ENCODE measurements at regions of chr6 and their contacts with region 1.

Region 1: DNA sequence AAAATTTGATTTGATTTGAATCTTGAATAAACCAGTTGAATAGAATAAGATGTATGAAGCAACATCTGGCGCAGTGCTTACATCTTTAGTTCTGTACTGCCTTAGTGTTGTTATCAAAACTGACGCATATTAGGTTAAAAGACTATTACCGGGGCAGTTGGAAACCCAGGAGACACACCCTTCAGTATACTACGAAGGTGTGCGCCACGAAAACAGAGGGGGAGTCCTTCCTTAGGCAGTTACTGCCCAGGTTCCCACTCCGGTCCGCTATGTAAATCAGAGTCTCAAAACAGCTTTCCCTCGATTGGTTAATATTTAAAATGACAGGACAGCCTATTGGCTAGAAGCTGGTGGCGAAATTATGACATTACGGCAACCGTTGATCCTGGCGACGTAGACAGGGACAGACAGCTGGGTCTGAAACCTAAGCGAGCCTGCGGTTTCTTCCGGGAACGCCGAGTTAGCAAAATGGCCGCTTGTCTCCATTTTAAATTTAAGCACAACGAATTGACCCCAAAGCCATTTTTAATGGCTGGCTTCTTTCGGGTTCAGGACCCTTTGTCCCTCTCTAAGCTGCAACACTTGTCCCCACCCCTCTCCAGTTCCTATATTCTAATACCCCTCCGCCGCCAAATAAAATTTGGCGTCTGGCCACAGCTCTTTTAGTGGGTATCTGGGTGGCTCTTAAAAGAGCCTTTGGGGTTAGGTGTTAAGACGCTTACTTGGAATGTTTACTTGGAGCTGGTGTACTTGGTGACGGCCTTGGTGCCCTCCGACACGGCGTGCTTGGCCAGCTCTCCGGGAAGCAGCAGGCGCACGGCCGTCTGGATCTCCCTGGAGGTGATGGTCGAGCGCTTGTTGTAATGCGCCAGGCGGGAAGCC is 35.8 kb downstream of the HFE start:
- DNase-seq: peak; percentile 95
- H3K4me3 Mint-ChIP-seq: peak overlapping the region; percentile 97
- H3K27ac Mint-ChIP-seq: peak overlapping the region; percentile 100
- H3K4me1 Mint-ChIP-seq: peaks cover 40% of the 10 kb centered on the region
- H3K27me3 Mint-ChIP-seq: no peaks in the 10 kb centered on the region

Region 2: DNA sequence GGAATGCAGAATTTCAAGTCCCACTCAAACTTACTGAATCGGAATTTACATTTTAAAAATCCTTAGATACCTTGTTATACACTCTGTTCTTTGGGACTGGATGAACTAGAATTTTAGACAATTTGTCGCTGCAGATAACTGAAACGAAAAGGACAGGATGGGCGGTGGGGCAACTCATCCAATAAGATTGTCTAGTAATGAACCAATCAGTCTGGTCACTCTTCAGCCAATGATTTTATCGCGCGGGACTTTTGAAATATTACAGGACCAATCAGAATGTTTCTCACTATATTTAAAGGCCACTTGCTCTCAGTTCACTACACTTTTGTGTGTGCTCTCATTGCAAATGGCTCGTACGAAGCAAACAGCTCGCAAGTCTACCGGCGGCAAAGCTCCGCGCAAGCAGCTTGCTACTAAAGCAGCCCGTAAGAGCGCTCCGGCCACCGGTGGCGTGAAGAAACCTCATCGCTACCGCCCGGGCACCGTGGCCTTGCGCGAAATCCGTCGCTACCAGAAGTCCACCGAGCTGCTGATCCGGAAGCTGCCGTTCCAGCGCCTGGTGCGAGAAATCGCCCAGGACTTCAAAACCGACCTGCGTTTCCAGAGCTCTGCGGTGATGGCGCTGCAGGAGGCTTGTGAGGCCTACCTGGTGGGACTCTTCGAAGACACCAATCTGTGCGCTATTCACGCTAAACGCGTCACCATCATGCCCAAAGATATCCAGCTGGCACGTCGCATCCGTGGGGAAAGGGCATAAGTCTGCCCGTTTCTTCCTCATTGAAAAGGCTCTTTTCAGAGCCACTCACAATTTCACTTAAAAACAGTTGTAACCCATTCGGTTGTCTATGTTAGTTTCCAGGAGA is 77.7 kb before region 1 on chr6:
- CTCF ChIA-PET with region 1: interaction called, 8 read pairs
- POLR2A ChIA-PET with region 1: interaction called, 276 read pairs
- DNase-seq: peak; percentile 82
- H3K4me3 Mint-ChIP-seq: peak overlapping the region; percentile 79
- H3K27ac Mint-ChIP-seq: peak overlapping the region; percentile 99
- H3K4me1 Mint-ChIP-seq: peaks cover 44% of the 10 kb centered on the region
- H3K27me3 Mint-ChIP-seq: no peaks in the 10 kb centered on the region

Region 3: GRCh38 chr6:26097268-26097875 is 25.7 kb before region 1 on chr6:
- CTCF ChIA-PET with region 1: interaction called, 14 read pairs
- POLR2A ChIA-PET with region 1: interaction called, 204 read pairs
- DNase-seq: peak; percentile 64
- H3K4me3 Mint-ChIP-seq: no peak overlapping the region
- H3K27ac Mint-ChIP-seq: no peak overlapping the region
- H3K4me1 Mint-ChIP-seq: peaks cover 10% of the 10 kb centered on the region
- H3K27me3 Mint-ChIP-seq: peaks cover 11% of the 10 kb centered on the region

Region 4: DNA sequence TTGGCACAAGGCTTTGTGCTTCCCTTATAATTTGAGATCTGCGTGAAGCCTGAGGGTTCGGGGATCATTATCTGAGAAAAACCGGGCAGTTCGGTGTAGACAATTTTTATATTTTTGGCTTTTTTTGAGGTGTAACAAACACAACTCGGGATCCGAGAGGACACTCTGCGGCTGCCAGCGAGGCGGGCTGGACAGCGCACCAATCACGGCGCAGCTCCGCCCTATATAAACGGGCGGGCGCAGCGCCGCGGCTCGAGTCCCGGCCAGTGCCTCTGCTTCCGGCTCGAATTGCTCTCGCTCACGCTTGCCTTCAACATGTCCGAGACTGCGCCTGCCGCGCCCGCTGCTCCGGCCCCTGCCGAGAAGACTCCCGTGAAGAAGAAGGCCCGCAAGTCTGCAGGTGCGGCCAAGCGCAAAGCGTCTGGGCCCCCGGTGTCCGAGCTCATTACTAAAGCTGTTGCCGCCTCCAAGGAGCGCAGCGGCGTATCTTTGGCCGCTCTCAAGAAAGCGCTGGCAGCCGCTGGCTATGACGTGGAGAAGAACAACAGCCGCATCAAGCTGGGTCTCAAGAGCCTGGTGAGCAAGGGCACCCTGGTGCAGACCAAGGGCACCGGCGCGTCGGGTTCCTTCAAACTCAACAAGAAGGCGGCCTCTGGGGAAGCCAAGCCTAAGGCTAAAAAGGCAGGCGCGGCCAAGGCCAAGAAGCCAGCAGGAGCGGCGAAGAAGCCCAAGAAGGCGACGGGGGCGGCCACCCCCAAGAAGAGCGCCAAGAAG is 33.2 kb after region 1 on chr6:
- CTCF ChIA-PET with region 1: interaction called, 65 read pairs
- POLR2A ChIA-PET with region 1: interaction called, 2,087 read pairs
- DNase-seq: peak; percentile 91
- H3K4me3 Mint-ChIP-seq: peak overlapping the region; percentile 95
- H3K27ac Mint-ChIP-seq: peak overlapping the region; percentile 98
- H3K4me1 Mint-ChIP-seq: peaks cover 45% of the 10 kb centered on the region
- H3K27me3 Mint-ChIP-seq: no peaks in the 10 kb centered on the region

Region 5: GRCh38 chr6:26196846-26197648 is 74.0 kb after region 1 on chr6:
- CTCF ChIA-PET with region 1: interaction called, 7 read pairs
- POLR2A ChIA-PET with region 1: interaction called, 499 read pairs
- DNase-seq: peak; percentile 85
- H3K4me3 Mint-ChIP-seq: peak overlapping the region; percentile 93
- H3K27ac Mint-ChIP-seq: peak overlapping the region; percentile 96
- H3K4me1 Mint-ChIP-seq: peaks cover 49% of the 10 kb centered on the region
- H3K27me3 Mint-ChIP-seq: no peaks in the 10 kb centered on the region

Region 6: DNA sequence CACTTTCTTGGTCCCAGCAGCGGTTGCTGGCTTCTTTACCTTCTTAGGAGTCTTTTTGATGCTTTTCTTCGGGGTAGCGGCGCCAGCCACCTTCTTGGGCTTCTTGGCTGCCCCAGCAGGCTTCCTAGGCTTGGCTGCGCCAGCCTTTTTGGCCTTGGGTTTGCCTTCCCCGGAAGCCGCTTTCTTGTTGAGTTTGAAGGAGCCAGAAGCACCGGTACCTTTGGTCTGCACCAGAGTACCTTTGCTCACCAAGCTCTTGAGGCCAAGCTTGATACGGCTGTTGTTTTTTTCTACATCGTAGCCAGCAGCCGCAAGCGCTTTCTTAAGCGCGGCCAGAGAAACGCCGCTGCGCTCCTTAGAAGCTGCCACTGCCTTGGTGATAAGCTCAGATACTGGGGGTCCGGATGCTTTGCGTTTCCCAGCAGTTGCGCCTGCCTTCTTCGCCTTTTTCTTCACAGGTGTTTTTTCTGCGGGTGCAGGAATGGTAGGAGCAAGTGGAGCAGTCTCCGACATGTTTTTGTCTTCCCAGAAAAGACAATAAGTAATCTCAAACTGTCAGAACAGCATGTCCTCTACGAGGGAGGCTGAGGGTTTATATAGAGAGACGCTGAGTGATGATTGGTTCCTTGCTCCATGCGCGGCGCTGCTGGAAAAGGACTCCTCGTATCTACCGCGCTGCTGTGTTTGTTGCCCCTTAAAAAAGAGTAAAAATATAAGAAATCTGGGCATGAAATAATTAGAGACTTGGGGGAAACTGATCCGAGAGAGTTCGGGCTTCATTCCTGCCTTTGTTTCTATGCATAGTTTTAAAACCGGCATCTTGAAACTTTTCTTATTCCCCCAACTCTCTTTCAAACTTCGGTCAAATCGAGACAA is 111.6 kb after region 1 on chr6:
- CTCF ChIA-PET with region 1: interaction called, 7 read pairs
- POLR2A ChIA-PET with region 1: interaction called, 149 read pairs
- DNase-seq: peak; percentile 85
- H3K4me3 Mint-ChIP-seq: peak overlapping the region; percentile 76
- H3K27ac Mint-ChIP-seq: peak overlapping the region; percentile 95
- H3K4me1 Mint-ChIP-seq: peaks cover 41% of the 10 kb centered on the region
- H3K27me3 Mint-ChIP-seq: no peaks in the 10 kb centered on the region

Region 7: DNA sequence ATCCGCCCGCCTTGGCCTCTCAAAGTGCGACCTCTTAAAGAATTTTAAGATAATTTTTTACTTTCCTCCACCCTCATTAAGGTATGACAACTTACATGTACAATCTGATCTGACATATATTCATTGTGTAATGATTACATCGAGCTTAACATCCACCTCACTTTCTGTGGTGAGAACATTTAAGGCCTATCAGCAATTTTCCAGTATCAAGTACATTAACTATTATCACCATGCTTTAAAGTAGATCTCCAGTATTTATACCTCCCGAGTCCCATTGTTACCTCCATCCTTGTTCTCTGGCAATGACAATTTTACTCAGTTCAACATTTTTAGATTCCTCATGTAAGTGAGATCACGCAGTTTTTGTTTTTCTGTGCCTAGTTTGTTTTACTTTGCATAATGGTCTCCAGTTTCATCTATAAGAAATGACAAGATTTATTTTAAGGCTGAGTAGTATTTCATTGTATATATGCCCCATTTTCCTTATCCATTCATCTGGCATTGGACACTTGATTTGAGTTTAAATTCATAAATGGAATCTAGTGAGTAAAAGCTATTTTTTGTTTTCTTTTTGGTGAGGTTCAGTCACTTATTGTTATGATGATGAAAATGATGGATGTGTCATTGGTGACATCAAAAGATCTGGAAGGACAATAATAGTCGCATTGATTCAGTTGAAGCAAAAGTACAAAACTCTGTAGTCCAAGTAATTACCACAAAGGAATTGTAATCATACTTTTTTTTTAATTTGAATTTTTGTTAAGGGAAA is 1702.2 kb after region 1 on chr6:
- CTCF ChIA-PET with region 1: no interaction called
- POLR2A ChIA-PET with region 1: interaction called, 10 read pairs
- DNase-seq: no peak
- H3K4me3 Mint-ChIP-seq: peak overlapping the region; percentile 82
- H3K27ac Mint-ChIP-seq: peak overlapping the region; percentile 99
- H3K4me1 Mint-ChIP-seq: peaks cover 51% of the 10 kb centered on the region
- H3K27me3 Mint-ChIP-seq: no peaks in the 10 kb centered on the region

Measured in activated CD4-positive, alpha-beta memory T cell treated with anti-CD3 and anti-CD28 coated beads, Interleukin-2, amount 10 ng/mL, durations not matched to agents 7 days and 5 days (primary cell).